Cardiac septum (tissue), 1 donor: ENCODE measurements at regions of chr11 and their contacts with region 1.

Region 1: GRCh38 chr11:14892036-14892567 is at the start of gene CYP2R1:
- DNase-seq: peak; percentile 98
- total RNA-seq, gene CYP2R1: 7.9 TPM

Region 2: DNA sequence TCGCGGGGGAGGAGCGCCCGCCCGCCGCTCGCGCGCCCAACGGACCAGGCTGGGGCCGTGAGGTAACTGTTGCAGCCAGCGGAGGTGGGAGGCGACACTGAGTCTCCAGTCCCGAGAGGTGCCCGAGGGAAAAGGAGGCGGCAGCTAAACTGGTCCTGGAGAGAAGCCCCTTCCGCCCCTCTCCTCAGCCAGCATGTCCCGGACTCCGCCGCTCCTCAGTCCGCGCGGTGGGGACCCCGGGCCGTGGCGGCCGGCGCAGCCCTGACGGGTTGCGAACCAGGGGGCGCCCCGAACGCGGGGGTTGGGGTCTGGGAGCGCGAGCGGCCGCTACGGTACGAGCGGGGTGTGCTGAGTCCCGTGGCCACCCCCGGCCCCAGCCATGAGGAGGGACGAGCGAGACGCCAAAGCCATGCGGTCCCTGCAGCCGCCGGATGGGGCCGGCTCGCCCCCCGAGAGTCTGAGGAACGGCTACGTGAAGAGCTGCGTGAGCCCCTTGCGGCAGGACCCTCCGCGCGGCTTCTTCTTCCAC is 248.3 kb before region 1 on chr11 and contains the start of gene PDE3B:
- intact Hi-C with region 1: loop called (anchors 2 kb)
- DNase-seq: peak; percentile 94
- total RNA-seq, gene PDE3B: 8.7 TPM

Region 3: GRCh38 chr11:15093432-15093831 is 201.3 kb after region 1 on chr11:
- intact Hi-C with region 1: no loop called
- DNase-seq: no peak